Heart left ventricle (tissue), 16 donors: ENCODE measurements at regions of chr2 and their contacts with region 1.

Region 1: GRCh38 chr2:196592912-196593881 is 46.3 kb upstream of the CCDC150 start:
- DNase-seq: peak; percentile 32 to 76 (median 56)
- ATAC-seq: peak; percentile 78 to 82 (median 80)
- H3K4me3 ChIP-seq: peak within 1 kb of the TSS; percentile 50 to 83 (median 70)
- H3K27ac ChIP-seq: peak within 1 kb of the TSS; percentile 62 to 93 (median 80)
- H3K4me1 ChIP-seq: peaks cover 0 to 14% (median 0%) of the 10 kb centered on the region in 12 donors
- H3K27me3 ChIP-seq: peaks cover 0 to 66% (median 0%) of the 10 kb centered on the region in 9 donors
- CTCF ChIP-seq: peak in 6 of 12 donors; percentile 9 to 36 (median 20)
- POLR2A ChIP-seq: no peak

Region 2: DNA sequence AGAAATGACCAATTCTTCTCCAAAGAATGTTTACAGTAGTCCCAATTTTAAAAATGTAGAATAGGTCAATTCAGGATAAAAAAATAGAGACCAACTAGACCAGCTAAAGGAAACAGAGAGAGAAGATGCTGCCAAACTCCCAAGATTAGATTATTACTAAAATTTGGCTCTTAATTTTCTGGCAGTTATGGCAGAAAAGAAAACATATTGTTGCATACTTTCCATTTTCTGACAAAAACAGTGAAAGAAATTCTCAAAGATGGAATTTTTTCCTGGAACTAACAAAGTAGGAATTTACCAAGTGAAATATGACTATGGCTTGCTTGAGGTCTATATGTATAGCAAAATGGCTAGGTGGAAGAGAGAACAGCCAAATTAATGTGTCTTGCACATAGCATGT is 283.5 kb before region 1 on chr2:
- intact Hi-C with region 1: loop called in 2 of 10 experiments (anchors 10 kb)
- DNase-seq: no peak
- ATAC-seq: no peak
- H3K4me3 ChIP-seq: no peak overlapping the region
- H3K27ac ChIP-seq: peak overlapping the region in 1 of 12 donors; percentile 63
- H3K4me1 ChIP-seq: peaks cover 0 to 27% (median 3%) of the 10 kb centered on the region in 12 donors
- H3K27me3 ChIP-seq: no peaks in the 10 kb centered on the region
- CTCF ChIP-seq: no peak
- POLR2A ChIP-seq: no peak

Region 3: DNA sequence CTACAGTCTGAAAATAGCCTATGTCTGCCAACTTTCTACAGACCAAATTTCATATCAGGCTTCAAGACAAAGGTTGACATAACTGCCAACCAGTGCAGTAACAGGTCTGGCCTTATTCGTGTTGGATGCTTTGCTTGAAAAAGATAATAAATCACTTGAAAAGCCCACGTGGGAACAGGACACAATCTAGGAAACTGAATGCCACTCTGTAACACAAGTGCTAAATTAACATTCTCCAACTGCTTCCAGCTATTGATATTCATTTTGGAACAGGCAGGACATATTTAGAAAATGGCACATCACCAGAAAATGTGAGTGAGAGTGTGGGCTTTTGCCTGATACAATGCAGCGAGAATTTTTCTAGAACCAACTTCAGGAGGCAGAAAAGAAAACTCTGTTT is 119.6 kb before region 1 on chr2:
- intact Hi-C with region 1: loop called in 5 of 10 experiments (anchors 5 to 10 kb)
- DNase-seq: peak in 4 of 5 donors; percentile 18 to 42 (median 36)
- ATAC-seq: peak; percentile 92 to 97 (median 94)
- H3K4me3 ChIP-seq: no peak overlapping the region
- H3K27ac ChIP-seq: peak overlapping the region in 9 of 12 donors; percentile 2 to 87 (median 67)
- H3K4me1 ChIP-seq: peaks cover 0 to 31% (median 5%) of the 10 kb centered on the region in 12 donors
- H3K27me3 ChIP-seq: no peaks in the 10 kb centered on the region
- CTCF ChIP-seq: no peak
- POLR2A ChIP-seq: no peak

Region 4: DNA sequence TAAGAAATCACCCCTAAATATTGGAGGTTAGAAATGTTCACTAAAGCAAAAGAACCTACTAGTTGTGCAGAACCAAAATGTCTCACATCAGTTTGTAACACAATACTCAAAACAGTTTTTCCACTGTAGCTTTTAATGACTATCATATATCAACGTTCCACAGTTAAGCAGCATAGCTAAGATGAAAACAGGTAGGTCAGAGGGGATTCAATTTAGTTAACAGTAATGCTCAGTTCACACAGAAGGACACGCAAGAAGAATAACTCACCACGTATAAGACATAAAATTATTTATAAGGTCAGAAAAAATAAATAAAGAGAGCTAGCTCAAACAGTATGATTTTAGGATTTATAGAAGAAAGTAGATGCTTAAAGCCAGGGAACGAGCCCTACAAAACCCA is 72.6 kb before region 1 on chr2:
- intact Hi-C with region 1: no loop called
- DNase-seq: no peak
- ATAC-seq: no peak
- H3K4me3 ChIP-seq: no peak overlapping the region
- H3K27ac ChIP-seq: no peak overlapping the region
- H3K4me1 ChIP-seq: peaks cover 0 to 3% (median 0%) of the 10 kb centered on the region in 12 donors
- H3K27me3 ChIP-seq: no peaks in the 10 kb centered on the region
- CTCF ChIP-seq: no peak
- POLR2A ChIP-seq: no peak

Region 5: DNA sequence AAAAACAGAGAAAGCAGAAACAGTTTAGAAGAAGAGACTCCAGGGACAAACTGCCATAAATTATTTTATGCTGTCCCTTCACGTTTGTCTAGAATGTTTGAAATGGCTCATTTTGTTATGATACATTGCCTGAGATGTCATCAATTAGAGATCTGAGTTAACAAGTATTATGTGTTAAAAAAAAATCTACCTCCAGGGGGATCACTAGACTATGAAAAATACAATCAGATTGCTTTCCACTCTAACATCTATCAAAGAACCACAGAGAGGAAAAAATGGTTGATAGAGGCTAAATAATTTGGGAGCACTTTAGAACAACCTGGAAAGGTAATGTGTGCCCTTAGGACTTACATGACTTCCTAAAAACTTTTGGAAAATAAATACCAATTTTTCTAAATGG is 57.5 kb before region 1 on chr2:
- intact Hi-C with region 1: loop called in 2 of 10 experiments (anchors 2 to 10 kb)
- DNase-seq: no peak
- ATAC-seq: no peak
- H3K4me3 ChIP-seq: no peak overlapping the region
- H3K27ac ChIP-seq: peak overlapping the region in 1 of 12 donors; percentile 72
- H3K4me1 ChIP-seq: peaks cover 0 to 35% (median 0%) of the 10 kb centered on the region in 12 donors
- H3K27me3 ChIP-seq: no peaks in the 10 kb centered on the region
- CTCF ChIP-seq: no peak
- POLR2A ChIP-seq: no peak

Region 6: GRCh38 chr2:196558497-196558896 is 34.7 kb before region 1 on chr2:
- intact Hi-C with region 1: no loop called
- DNase-seq: no peak
- ATAC-seq: no peak
- H3K4me3 ChIP-seq: no peak overlapping the region
- H3K27ac ChIP-seq: no peak overlapping the region
- H3K4me1 ChIP-seq: no peaks in the 10 kb centered on the region
- H3K27me3 ChIP-seq: no peaks in the 10 kb centered on the region
- CTCF ChIP-seq: no peak
- POLR2A ChIP-seq: no peak

Region 7: DNA sequence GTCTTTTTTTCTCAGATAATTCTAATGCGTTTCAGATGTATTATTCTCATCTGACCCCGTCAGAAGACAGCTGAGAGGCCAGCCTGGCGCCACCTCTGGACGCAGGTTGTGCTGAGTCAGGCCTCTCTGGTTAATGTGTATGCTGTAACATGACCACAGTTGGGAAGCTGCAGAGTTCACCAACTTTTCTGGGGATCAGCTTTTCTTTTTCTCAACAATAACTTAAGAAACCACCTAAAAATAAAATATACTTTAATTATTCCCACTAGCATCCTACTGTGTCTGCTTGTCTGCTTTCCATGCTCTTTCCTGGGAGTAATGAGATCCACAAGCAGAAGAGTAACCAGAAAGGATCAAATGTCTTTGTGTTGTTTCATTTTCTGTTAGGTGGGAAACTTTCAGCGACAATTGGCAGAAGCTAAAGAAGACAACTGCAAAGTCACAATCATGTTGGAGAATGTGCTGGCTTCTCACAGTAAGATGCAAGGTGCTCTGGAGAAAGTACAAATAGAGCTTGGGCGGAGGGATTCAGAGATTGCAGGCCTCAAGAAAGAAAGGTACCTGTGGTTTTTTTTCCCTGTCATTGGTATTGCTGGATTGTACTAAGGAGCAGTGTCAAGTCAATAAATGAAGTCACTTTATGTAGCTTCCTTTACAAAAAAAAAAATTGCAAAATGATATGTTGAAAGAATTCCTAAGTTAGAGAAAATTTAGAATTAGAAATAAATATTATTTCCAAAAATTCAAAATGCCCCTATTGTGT is 126.1 kb after region 1 on chr2:
- intact Hi-C with region 1: no loop called
- DNase-seq: peak in 1 of 5 donors; percentile 45
- ATAC-seq: peak in 3 of 4 donors; percentile 47 to 76 (median 63)
- H3K4me3 ChIP-seq: no peak overlapping the region
- H3K27ac ChIP-seq: no peak overlapping the region
- H3K4me1 ChIP-seq: no peaks in the 10 kb centered on the region
- H3K27me3 ChIP-seq: no peaks in the 10 kb centered on the region
- CTCF ChIP-seq: no peak
- POLR2A ChIP-seq: no peak